Activated naive CD4-positive, alpha-beta T cell treated with anti-CD3 and anti-CD28 coated beads for 36 hours (primary cell): ENCODE measurements at regions of chr7 and their contacts with region 1.

Region 1: DNA sequence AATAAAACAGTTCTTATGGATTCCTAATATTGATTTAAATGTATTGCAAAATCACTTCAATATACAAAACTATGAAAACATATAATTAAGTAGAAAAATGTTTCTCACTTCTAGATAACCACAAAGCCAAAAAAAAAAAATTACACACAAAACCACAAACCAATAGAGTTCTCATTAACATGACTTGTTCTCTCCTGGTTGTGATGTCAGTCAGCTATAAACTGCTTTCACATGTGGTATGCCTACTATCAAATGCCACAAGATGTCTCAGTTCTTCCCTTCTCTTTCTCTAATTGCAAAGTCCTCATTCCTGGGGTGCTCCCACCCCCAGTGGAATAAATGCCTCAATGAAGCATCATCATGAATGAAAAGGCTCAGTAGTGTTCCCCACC is 16.6 kb downstream of the GNAI1 start:
- DNase-seq: peak; percentile 61
- H3K4me3 Mint-ChIP-seq: no peak overlapping the region
- H3K27ac Mint-ChIP-seq: peak overlapping the region; percentile 26
- H3K4me1 Mint-ChIP-seq: peaks cover 18% of the 10 kb centered on the region
- H3K27me3 Mint-ChIP-seq: peaks cover 14% of the 10 kb centered on the region

Region 2: DNA sequence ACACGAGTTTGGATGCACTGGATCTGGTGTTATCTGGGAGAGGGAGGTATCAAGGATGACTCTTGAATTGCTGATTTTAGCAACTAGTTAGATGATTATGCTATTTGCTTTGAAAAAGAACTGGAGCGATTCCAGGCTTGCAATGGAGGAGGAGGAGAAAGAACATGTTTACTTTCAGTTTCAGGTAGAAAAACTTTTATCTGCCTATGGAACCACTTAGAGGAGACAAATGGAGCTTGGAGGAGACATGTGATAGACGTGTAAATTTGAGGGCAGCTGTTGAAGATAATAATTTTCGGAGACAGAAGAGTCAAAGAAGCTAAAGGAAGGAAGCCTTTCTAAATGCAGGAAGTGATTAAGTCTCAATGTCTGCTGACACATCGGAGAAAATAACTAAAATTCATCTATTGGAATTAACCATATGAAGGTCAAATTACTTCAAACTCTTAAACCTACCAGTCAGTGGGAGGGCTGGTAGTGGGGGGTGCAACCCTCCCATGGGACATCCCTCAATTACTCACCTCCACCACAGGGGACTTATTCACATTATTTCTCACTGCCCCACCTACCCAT is 73.0 kb before region 1 on chr7:
- CTCF ChIA-PET with region 1: no interaction called
- intact Hi-C with region 1: loop called (anchors 1 kb)
- DNase-seq: peak; percentile 32
- H3K4me3 Mint-ChIP-seq: peak overlapping the region; percentile 61
- H3K27ac Mint-ChIP-seq: peak overlapping the region; percentile 23
- H3K4me1 Mint-ChIP-seq: peaks cover 13% of the 10 kb centered on the region
- H3K27me3 Mint-ChIP-seq: no peaks in the 10 kb centered on the region

Region 3: GRCh38 chr7:80161466-80161865 is 10.2 kb after region 1 on chr7:
- CTCF ChIA-PET with region 1: no interaction called
- intact Hi-C with region 1: loop called (anchors 1 kb)
- DNase-seq: no peak
- H3K4me3 Mint-ChIP-seq: no peak overlapping the region
- H3K27ac Mint-ChIP-seq: no peak overlapping the region
- H3K4me1 Mint-ChIP-seq: peaks cover 6% of the 10 kb centered on the region
- H3K27me3 Mint-ChIP-seq: peaks cover 2% of the 10 kb centered on the region

Region 4: GRCh38 chr7:80172387-80172786 is 21.1 kb after region 1 on chr7:
- CTCF ChIA-PET with region 1: no interaction called
- intact Hi-C with region 1: loop called (anchors 1 kb)
- DNase-seq: no peak
- H3K4me3 Mint-ChIP-seq: peak overlapping the region; percentile 24
- H3K27ac Mint-ChIP-seq: no peak overlapping the region
- H3K4me1 Mint-ChIP-seq: peaks cover 33% of the 10 kb centered on the region
- H3K27me3 Mint-ChIP-seq: peaks cover 8% of the 10 kb centered on the region

Region 5: DNA sequence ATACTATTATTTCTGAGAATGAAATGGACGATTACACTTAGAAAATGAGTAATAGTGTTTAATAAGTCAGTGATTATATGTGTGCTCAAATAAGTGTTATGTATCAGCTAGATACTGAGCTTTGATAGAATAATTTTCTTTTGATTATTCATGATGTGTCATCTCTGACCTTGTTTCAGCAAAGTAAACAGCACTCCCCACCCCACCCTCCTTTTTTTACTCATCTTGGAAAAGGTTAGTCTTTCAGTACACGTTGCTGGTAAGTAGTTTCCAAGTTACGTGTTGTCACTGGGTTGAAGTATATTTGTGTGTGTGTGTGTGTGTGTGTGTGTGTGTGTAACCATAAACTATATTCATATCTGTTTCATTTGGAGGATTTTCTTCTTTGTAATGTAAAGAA is 67.5 kb after region 1 on chr7:
- CTCF ChIA-PET with region 1: interaction called, 4 read pairs
- intact Hi-C with region 1: loop called (anchors 5 kb)
- DNase-seq: peak; percentile 18
- H3K4me3 Mint-ChIP-seq: no peak overlapping the region
- H3K27ac Mint-ChIP-seq: no peak overlapping the region
- H3K4me1 Mint-ChIP-seq: peaks cover 7% of the 10 kb centered on the region
- H3K27me3 Mint-ChIP-seq: peaks cover under 1% of the 10 kb centered on the region

Region 6: GRCh38 chr7:80312139-80312661 is 160.9 kb after region 1 on chr7:
- CTCF ChIA-PET with region 1: no interaction called
- intact Hi-C with region 1: loop called (anchors 2 kb)
- DNase-seq: peak; percentile 49
- H3K4me3 Mint-ChIP-seq: peak overlapping the region; percentile 16
- H3K27ac Mint-ChIP-seq: peak overlapping the region; percentile 38
- H3K4me1 Mint-ChIP-seq: peaks cover 30% of the 10 kb centered on the region
- H3K27me3 Mint-ChIP-seq: no peaks in the 10 kb centered on the region

Region 7: GRCh38 chr7:80346704-80347103 is 195.4 kb after region 1 on chr7:
- CTCF ChIA-PET with region 1: interaction called, 5 read pairs
- intact Hi-C with region 1: loop called (anchors 1 kb)
- DNase-seq: peak; percentile 6
- H3K4me3 Mint-ChIP-seq: no peak overlapping the region
- H3K27ac Mint-ChIP-seq: peak overlapping the region; percentile 54
- H3K4me1 Mint-ChIP-seq: peaks cover 13% of the 10 kb centered on the region
- H3K27me3 Mint-ChIP-seq: peaks cover 5% of the 10 kb centered on the region